Lower leg skin (tissue), 4 donors: ENCODE measurements at regions of chr14 and their contacts with region 1.

Region 1: GRCh38 chr14:28217743-28218142 is 548.8 kb upstream of the FOXG1 start:
- DNase-seq: no peak
- H3K4me3 ChIP-seq: no peak overlapping the region
- CTCF ChIP-seq: no peak
- POLR2A ChIP-seq: no peak

Region 2: GRCh38 chr14:28012634-28013407 is 204.9 kb before region 1 on chr14:
- intact Hi-C with region 1: no loop called
- DNase-seq: no peak
- H3K4me3 ChIP-seq: no peak overlapping the region
- CTCF ChIP-seq: no peak
- POLR2A ChIP-seq: no peak

Region 3: GRCh38 chr14:29339494-29340172 is 1121.9 kb after region 1 on chr14:
- intact Hi-C with region 1: loop called (anchors 10 kb)
- DNase-seq: no peak
- H3K4me3 ChIP-seq: no peak overlapping the region
- CTCF ChIP-seq: no peak
- POLR2A ChIP-seq: no peak